ENCODE measurements at regions of chr2 and their contacts with region 1.

Region 1: DNA sequence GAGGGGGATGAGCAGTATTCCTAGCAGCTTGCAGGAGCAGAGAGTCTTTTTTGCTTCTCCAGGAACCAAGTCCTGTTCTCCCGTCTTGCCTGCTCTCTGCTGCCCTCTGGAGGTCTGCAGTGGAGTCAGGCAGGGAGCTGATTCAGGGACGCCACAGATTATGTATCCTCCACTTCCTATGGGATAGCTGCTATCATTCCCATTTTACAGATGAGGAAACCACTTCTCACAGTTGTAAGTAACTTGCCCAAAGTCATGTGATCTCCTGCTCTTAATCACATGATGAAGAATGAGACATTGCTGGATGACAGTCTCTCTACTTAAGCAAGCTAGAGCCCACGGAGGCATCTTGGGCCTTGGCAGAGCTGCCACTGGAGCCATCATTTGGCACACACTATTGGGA is 8.3 kb downstream of the SLC4A5 start:
- H3K4me3 ChIP-seq: no peak overlapping the region
- H3K27ac ChIP-seq: no peak overlapping the region
- H3K4me1 ChIP-seq: no peaks in the 10 kb centered on the region
- CTCF ChIP-seq: peak; percentile 71

Region 2: DNA sequence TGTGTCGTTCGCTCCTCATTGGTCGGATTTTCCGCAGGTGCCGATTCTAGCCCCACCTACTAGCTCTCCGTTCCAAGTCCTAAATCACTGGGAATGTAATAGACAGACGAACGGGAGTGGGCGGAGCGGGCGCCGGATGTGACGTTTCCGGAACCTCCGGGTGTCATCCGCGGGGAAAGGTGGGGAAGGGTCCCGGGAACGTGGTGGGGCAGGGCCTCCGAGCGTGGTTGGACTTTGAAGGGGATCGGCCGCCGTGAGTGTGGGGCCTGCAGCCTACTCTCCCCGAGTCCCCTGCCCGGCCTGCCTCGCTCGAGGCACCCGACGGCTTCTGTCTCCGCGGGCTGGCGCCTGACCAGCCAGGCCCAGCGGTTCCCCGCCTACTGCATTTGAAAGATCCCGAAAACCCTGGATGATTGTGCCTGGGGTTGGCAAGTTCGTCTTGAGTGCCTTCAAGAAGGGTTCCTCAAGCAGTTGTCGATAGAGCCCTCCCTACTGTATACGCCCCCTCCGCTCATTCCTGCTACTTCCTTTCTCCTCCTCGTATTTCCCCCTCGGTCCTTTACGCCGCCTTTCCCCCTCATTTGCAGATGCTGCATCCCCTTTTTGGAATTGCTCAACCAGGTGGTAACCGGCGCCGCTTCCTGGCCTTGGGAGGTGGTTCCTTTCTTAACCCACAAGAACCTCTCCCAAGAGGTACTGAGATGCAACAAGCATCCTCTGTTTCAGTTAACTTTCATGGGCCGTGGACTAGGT is 505.9 kb before region 1 on chr2 and contains the start of gene STAMBP:
- CTCF ChIA-PET with region 1: interaction called, 19 read pairs
- POLR2A ChIA-PET with region 1: no interaction called
- H3K4me3 ChIP-seq: peak within 1 kb of the TSS; percentile 91
- H3K27ac ChIP-seq: peak within 1 kb of the TSS; percentile 80
- H3K4me1 ChIP-seq: 0 out of 2 replicates have a peak, but pooled peaks cover 4% of the 10 kb centered on the region
- CTCF ChIP-seq: no peak

Region 3: GRCh38 chr2:74002487-74003391 is 332.2 kb before region 1 on chr2:
- CTCF ChIA-PET with region 1: no interaction called
- POLR2A ChIA-PET with region 1: no interaction called
- H3K4me3 ChIP-seq: peak overlapping the region; percentile 56
- H3K27ac ChIP-seq: peak overlapping the region; percentile 63; the same call in 1 of the 2 replicates
- H3K4me1 ChIP-seq: peaks cover 38% of the 10 kb centered on the region
- CTCF ChIP-seq: no peak

Region 4: GRCh38 chr2:74261204-74261864 is 73.6 kb before region 1 on chr2:
- CTCF ChIA-PET with region 1: interaction called, 16 read pairs
- POLR2A ChIA-PET with region 1: no interaction called
- H3K4me3 ChIP-seq: no peak overlapping the region
- H3K27ac ChIP-seq: no peak overlapping the region
- H3K4me1 ChIP-seq: no peaks in the 10 kb centered on the region
- CTCF ChIP-seq: peak; percentile 83

Region 5: DNA sequence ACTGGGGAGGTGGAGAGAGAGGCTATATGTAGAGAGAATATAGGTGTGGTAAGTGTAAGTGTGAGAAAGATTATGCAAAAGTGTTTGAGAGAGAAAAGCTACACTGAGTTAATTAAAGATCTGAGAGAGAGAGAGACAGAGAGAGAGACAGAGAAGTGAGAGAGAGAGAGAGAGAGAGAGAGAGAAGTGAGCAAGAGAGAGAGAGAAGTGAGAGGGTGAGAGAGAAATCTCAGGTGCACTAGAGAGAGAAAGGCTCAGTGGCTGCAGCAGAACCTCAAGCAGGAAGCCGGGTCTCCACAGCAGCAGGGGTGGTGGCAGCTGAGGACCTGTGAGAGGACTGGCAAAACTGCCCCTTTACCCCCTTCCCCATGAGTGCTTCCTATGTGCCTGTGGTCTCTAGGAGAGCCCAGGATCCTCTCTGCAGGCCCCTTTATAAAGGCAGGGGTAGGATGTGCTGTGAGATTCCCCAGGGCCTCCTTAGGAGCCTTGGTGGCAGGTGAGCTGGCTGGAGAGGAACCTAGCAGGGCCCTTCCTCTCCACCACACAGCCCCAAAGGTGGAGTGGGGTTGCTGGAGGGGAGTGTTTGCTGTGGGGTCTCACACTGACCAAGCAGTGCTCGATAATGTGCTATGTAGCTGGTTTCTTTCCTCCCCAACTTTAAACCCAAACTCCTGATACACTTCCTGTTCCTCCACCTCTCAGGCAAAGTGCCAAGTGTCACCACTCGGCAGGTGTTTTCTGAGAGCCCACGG is 44.3 kb before region 1 on chr2:
- CTCF ChIA-PET with region 1: interaction called, 12 read pairs
- POLR2A ChIA-PET with region 1: no interaction called
- H3K4me3 ChIP-seq: no peak overlapping the region
- H3K27ac ChIP-seq: no peak overlapping the region
- H3K4me1 ChIP-seq: no peaks in the 10 kb centered on the region
- CTCF ChIP-seq: no peak

Region 6: GRCh38 chr2:74345272-74345943 is 10.5 kb after region 1 on chr2:
- CTCF ChIA-PET with region 1: interaction called, 42 read pairs
- POLR2A ChIA-PET with region 1: no interaction called
- H3K4me3 ChIP-seq: no peak overlapping the region
- H3K27ac ChIP-seq: no peak overlapping the region
- H3K4me1 ChIP-seq: no peaks in the 10 kb centered on the region; the same call in 1 of the 2 replicates
- CTCF ChIP-seq: no peak

Region 7: GRCh38 chr2:74391580-74392448 is 56.9 kb after region 1 on chr2:
- CTCF ChIA-PET with region 1: interaction called, 35 read pairs
- POLR2A ChIA-PET with region 1: interaction called, 10 read pairs
- H3K4me3 ChIP-seq: peak overlapping the region; percentile 92
- H3K27ac ChIP-seq: peak overlapping the region; percentile 91
- H3K4me1 ChIP-seq: peaks cover 8% of the 10 kb centered on the region; the same call in 1 of the 2 replicates
- CTCF ChIP-seq: peak; percentile 94

Region 8: DNA sequence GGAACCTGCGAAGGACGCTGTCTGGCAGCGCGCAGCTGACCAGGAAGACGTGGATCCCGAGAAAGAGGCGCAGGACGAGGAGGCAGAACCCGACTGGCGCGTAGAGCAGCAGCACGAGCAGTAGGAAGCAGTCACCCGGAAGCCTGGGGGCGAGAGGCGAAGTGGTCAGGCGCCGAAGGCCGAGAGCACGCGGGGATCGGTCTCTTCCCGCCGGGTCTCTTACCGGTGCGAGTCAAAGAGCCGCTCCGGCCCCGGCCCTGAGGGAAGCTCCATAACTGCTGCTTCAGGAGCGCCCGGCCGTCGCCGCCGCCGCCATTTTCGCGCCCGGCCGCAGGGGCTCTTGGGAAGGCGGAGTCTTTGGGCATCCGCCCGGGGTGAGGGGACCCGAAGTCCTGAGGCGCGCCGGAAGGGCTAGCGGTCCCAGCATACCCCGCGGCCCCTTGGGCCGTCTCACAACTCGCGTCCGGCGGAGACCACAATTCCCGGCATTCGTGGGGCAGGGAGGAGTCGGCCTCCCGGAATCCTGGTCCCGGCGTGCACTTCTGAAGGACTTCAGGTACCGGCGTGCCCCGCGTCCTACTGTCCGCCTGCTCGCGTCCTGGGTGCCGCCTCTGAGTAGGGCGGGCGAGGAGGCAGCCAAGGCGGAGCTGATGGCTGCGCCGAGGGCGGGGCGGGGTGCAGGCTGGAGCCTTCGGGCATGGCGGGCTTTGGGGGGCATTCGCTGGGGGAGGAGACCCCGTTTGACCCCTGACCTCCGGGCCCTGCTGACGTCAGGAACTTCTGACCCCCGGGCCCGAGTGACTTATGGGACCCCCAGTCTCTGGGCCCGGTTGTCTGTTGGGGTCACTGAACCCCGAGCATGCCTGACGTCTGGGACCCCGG is 194.7 kb after region 1 on chr2 and contains the starts of genes AUP1 and HTRA2:
- CTCF ChIA-PET with region 1: interaction called, 10 read pairs
- POLR2A ChIA-PET with region 1: no interaction called
- H3K4me3 ChIP-seq: peak within 1 kb of the TSS; percentile 57
- H3K27ac ChIP-seq: peak within 1 kb of the TSS; percentile 72
- H3K4me1 ChIP-seq: no peaks in the 10 kb centered on the region; the same call in 1 of the 2 replicates
- CTCF ChIP-seq: no peak